ENCODE measurements at regions of chr18 and their contacts with region 1.

Region 1: GRCh38 chr18:45255197-45255890 is 359.9 kb upstream of the SLC14A2 start:
- DNase-seq: no peak
- H3K4me3 ChIP-seq: no peak overlapping the region
- H3K27ac ChIP-seq: no peak overlapping the region
- H3K4me1 ChIP-seq: no peaks in the 10 kb centered on the region
- H3K27me3 ChIP-seq: no peaks in the 10 kb centered on the region
- CTCF ChIP-seq: no peak
- POLR2A ChIP-seq: no peak

Region 2: GRCh38 chr18:44917216-44918141 is 337.9 kb before region 1 on chr18:
- intact Hi-C with region 1: no loop called
- DNase-seq: no peak
- H3K4me3 ChIP-seq: no peak overlapping the region
- H3K27ac ChIP-seq: peak overlapping the region; percentile 47 to 51
- H3K4me1 ChIP-seq: no peaks in the 10 kb centered on the region
- H3K27me3 ChIP-seq: no peaks in the 10 kb centered on the region
- CTCF ChIP-seq: no peak
- POLR2A ChIP-seq: no peak

Region 3: GRCh38 chr18:44943311-44943881 is 311.9 kb before region 1 on chr18:
- intact Hi-C with region 1: no loop called
- DNase-seq: no peak
- H3K4me3 ChIP-seq: no peak overlapping the region
- H3K27ac ChIP-seq: no peak overlapping the region
- H3K4me1 ChIP-seq: no peaks in the 10 kb centered on the region
- H3K27me3 ChIP-seq: no peaks in the 10 kb centered on the region
- CTCF ChIP-seq: no peak
- POLR2A ChIP-seq: no peak

Region 4: GRCh38 chr18:45066886-45067285 is 188.5 kb before region 1 on chr18:
- intact Hi-C with region 1: no loop called
- DNase-seq: no peak
- H3K4me3 ChIP-seq: no peak overlapping the region
- H3K27ac ChIP-seq: no peak overlapping the region
- H3K4me1 ChIP-seq: no peaks in the 10 kb centered on the region
- H3K27me3 ChIP-seq: no peaks in the 10 kb centered on the region
- CTCF ChIP-seq: no peak
- POLR2A ChIP-seq: no peak

Region 5: DNA sequence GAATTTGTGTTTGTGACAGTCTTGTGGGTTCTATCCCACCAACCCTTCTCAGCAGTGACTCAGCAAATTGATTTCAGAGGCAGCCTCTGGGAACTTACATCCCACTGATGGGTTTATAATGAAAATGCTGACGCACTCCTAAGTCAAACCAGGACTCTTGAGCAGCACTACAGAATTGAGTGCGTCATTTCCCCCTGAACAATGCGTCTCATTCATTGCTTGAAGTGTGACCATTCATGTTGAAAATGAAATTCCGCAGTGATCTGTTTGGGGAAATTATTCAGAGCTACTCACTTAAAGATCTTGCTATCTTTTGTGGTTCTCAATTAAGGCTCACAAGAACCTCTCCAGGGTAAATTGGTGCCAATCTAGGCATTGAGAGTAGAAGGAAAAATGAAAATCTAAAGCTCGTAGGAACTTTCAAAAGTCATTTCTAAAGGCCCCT is 57.8 kb before region 1 on chr18:
- intact Hi-C with region 1: no loop called
- DNase-seq: no peak
- H3K4me3 ChIP-seq: no peak overlapping the region
- H3K27ac ChIP-seq: no peak overlapping the region
- H3K4me1 ChIP-seq: no peaks in the 10 kb centered on the region
- H3K27me3 ChIP-seq: no peaks in the 10 kb centered on the region
- CTCF ChIP-seq: no peak
- POLR2A ChIP-seq: no peak

Region 6: GRCh38 chr18:45384137-45384961 is 129.0 kb after region 1 on chr18:
- intact Hi-C with region 1: loop called (anchors 10 kb)
- DNase-seq: peak; percentile 38
- H3K4me3 ChIP-seq: no peak overlapping the region
- H3K27ac ChIP-seq: no peak overlapping the region
- H3K4me1 ChIP-seq: no peaks in the 10 kb centered on the region
- H3K27me3 ChIP-seq: no peaks in the 10 kb centered on the region
- CTCF ChIP-seq: peak; percentile 48 to 69 (median 60)
- POLR2A ChIP-seq: no peak

Region 7: GRCh38 chr18:45416168-45416567 is 160.8 kb after region 1 on chr18:
- intact Hi-C with region 1: loop called (anchors 10 kb)
- DNase-seq: peak; percentile 61
- H3K4me3 ChIP-seq: no peak overlapping the region
- H3K27ac ChIP-seq: no peak overlapping the region
- H3K4me1 ChIP-seq: no peaks in the 10 kb centered on the region
- H3K27me3 ChIP-seq: no peaks in the 10 kb centered on the region
- CTCF ChIP-seq: no peak
- POLR2A ChIP-seq: no peak

Region 8: DNA sequence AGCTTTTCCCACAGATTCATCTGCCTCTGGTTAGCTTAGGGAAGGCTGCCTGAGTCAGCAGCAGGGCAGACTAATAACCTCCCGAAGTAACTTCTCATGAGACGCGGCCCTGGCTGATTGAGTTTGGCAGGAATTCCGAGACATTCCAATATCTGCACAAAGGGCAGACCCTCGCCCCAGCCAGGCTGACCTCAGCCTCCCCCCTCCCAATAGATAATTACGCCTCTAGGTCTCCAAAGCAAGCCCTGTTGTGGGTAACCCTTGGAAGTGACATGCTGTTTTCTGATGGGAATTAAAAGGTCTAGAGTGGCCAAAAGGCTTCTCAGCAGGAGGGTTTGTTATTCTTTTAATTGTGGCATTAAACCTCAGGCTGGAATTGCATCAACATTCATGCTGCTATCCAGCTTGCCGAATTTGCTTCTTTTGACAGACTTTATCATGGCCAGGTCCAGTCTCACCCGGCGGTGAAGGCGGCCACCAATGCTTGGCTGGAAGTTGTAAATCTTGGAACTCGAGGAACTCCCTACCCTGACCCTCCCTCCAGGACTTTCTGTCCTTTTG is 261.9 kb after region 1 on chr18:
- intact Hi-C with region 1: loop called (anchors 10 kb)
- DNase-seq: no peak
- H3K4me3 ChIP-seq: no peak overlapping the region
- H3K27ac ChIP-seq: peak overlapping the region; percentile 21 to 47
- H3K4me1 ChIP-seq: no peaks in the 10 kb centered on the region
- H3K27me3 ChIP-seq: no peaks in the 10 kb centered on the region
- CTCF ChIP-seq: no peak
- POLR2A ChIP-seq: no peak

Measured in prostate gland (tissue), 2 donors.